Dendritic cell treated with granulocyte-macrophage colony-stimulating factor and Interleukin-4, amounts not matched to agents 40 ng/mL and 50 ng/mL, for 4 days (primary cell): ENCODE measurements at regions of chr12 and their contacts with region 1.

Region 1: GRCh38 chr12:53746592-53747092 is 5.1 kb downstream of the CISTR start:
- H3K4me3 Mint-ChIP-seq: no peak overlapping the region
- H3K27ac Mint-ChIP-seq: no peak overlapping the region
- H3K4me1 Mint-ChIP-seq: peaks cover 10% of the 10 kb centered on the region
- H3K27me3 Mint-ChIP-seq: peaks cover 26% of the 10 kb centered on the region

Region 2: GRCh38 chr12:53684654-53685220 is 61.9 kb before region 1 on chr12:
- intact Hi-C with region 1: no loop called
- H3K4me3 Mint-ChIP-seq: no peak overlapping the region
- H3K27ac Mint-ChIP-seq: no peak overlapping the region
- H3K4me1 Mint-ChIP-seq: peaks cover 11% of the 10 kb centered on the region
- H3K27me3 Mint-ChIP-seq: peaks cover 16% of the 10 kb centered on the region

Region 3: DNA sequence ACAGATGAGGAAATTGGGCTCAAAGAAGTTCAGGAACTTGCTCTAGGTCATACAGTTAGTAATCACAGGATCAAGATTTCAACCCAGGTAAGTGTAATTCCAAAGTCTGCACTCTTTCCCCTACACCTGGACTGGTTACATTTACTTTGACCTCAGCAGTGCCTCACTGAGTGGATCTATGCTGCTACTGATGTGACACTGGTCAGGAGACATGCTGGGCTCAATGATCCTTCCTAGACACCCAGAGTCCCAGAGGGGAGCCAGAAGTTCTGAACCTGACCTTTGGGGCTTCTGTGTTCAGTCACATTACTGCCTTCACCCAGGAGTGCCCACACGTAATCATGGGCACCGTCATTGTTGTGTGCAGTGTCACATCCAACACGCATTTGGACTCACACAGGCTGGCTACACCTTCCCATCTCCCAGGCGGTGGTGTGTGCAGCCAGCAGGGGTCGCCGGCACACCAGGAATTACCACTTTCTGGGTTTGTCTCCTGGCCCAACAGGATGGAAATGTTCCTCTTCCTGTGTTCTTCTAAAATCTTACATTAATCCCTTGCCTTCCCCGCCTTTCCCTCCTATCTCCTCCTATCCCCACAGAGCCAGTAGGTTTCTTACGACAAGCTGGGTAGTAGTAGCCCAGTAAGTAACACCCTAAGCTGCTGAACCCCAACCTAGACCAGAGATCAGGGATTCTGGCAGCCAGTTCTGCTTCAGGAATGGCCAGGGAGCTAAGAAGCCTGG is 45.0 kb before region 1 on chr12:
- intact Hi-C with region 1: loop called (anchors 1 kb)
- H3K4me3 Mint-ChIP-seq: no peak overlapping the region
- H3K27ac Mint-ChIP-seq: no peak overlapping the region
- H3K4me1 Mint-ChIP-seq: peaks cover 22% of the 10 kb centered on the region
- H3K27me3 Mint-ChIP-seq: peaks cover 88% of the 10 kb centered on the region